Common myeloid progenitor, CD34-positive (primary cell): ENCODE measurements at regions of chr10 and their contacts with region 1.

Region 1: GRCh38 chr10:28250782-28251181 is 52.1 kb downstream of the MPP7 start:
- DNase-seq: peak; percentile 25 to 51 (median 27)
- H3K4me3 ChIP-seq: no peak overlapping the region
- H3K27ac ChIP-seq: no peak overlapping the region
- H3K4me1 ChIP-seq: peaks cover 11 to 19% (median 14%) of the 10 kb centered on the region in 4 experiments
- H3K27me3 ChIP-seq: no peaks in the 10 kb centered on the region

Region 2: GRCh38 chr10:28266449-28267224 is 15.9 kb after region 1 on chr10:
- CTCF ChIA-PET with region 1: interaction called, 11 read pairs
- POLR2A ChIA-PET with region 1: no interaction called
- DNase-seq: peak in 1 of 3 donors; percentile 24
- H3K4me3 ChIP-seq: no peak overlapping the region
- H3K27ac ChIP-seq: no peak overlapping the region
- H3K4me1 ChIP-seq: peaks cover 0 to 6% (median 2%) of the 10 kb centered on the region in 4 experiments
- H3K27me3 ChIP-seq: no peaks in the 10 kb centered on the region

Region 3: DNA sequence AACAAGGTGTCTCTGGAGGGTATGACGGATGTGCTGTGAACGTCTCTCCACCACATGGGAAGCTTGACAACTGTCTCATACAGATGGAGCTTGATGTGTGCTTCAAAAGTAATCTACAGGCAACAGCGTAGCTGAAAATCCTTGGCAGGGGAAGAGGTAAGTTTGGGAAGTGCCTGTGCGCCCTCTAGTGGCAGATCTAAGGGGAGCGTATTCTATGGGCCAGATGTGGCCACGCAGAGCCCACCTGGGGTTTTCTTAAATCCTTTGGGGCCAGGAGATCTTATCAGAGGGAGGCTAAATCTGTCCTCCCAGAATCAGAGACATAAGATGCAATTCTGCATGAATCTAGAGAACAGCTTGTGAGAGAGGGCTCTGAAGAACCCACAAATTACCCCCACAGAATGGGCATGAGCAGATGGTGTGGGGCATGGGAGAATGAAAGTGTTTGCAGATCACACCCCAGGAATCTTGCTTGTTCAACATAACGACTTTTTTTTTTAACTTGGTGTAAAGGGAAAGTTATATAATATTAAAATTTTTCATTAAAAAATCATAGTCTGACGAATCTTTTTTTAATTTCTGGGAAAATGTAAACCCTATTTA is 143.3 kb after region 1 on chr10:
- CTCF ChIA-PET with region 1: interaction called, 47 read pairs
- POLR2A ChIA-PET with region 1: no interaction called
- DNase-seq: peak; percentile 62 to 79 (median 73)
- H3K4me3 ChIP-seq: peak overlapping the region in 1 of 7 experiments; percentile 17
- H3K27ac ChIP-seq: no peak overlapping the region
- H3K4me1 ChIP-seq: peaks cover 0 to 5% (median 4%) of the 10 kb centered on the region in 4 experiments
- H3K27me3 ChIP-seq: no peaks in the 10 kb centered on the region